Ovary (tissue), 10 donors: ENCODE measurements at regions of chr2 and their contacts with region 1.

Region 1: GRCh38 chr2:71306762-71307161 is 24.8 kb upstream of the ZNF638 start:
- DNase-seq: no peak
- H3K4me3 ChIP-seq: no peak overlapping the region
- H3K27ac ChIP-seq: no peak overlapping the region
- H3K4me1 ChIP-seq: no peaks in the 10 kb centered on the region
- H3K27me3 ChIP-seq: no peaks in the 10 kb centered on the region
- CTCF ChIP-seq: no peak
- EP300 ChIP-seq: no peak
- POLR2A ChIP-seq: no peak

Region 2: DNA sequence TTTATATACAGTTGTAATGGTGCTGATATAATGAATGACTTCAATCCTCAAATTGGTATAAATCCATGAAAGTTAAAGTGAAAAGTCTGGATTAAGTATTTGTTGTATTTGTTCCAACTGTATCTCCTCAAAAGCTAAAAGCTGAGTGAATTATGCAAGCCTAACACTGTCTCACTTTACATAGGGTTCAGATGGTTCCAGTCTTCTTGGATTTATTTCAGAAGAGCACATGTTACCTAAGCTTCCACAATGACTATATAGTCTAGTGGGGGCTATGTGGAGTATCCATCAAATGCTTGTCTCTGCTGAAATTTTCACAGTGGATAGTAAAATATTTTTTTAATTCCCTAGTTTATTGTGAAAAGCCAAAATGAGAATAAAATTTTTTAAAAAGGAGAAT is 189.7 kb before region 1 on chr2:
- intact Hi-C with region 1: no loop called
- DNase-seq: no peak
- H3K4me3 ChIP-seq: no peak overlapping the region
- H3K27ac ChIP-seq: no peak overlapping the region
- H3K4me1 ChIP-seq: no peaks in the 10 kb centered on the region
- H3K27me3 ChIP-seq: no peaks in the 10 kb centered on the region
- CTCF ChIP-seq: no peak
- EP300 ChIP-seq: no peak
- POLR2A ChIP-seq: no peak

Region 3: GRCh38 chr2:71498261-71498701 is 191.5 kb after region 1 on chr2:
- intact Hi-C with region 1: loop called in 1 of 4 experiments (anchors 5 kb)
- DNase-seq: no peak
- H3K4me3 ChIP-seq: no peak overlapping the region
- H3K27ac ChIP-seq: no peak overlapping the region
- H3K4me1 ChIP-seq: peaks cover 1% of the 10 kb centered on the region
- H3K27me3 ChIP-seq: no peaks in the 10 kb centered on the region
- CTCF ChIP-seq: no peak
- EP300 ChIP-seq: no peak
- POLR2A ChIP-seq: no peak

Region 4: GRCh38 chr2:71505086-71505769 is 198.5 kb after region 1 on chr2:
- intact Hi-C with region 1: loop called in 2 of 4 experiments (anchors 5 kb)
- DNase-seq: peak in 2 of 5 donors; percentile 39 to 43
- H3K4me3 ChIP-seq: no peak overlapping the region
- H3K27ac ChIP-seq: no peak overlapping the region
- H3K4me1 ChIP-seq: no peaks in the 10 kb centered on the region
- H3K27me3 ChIP-seq: no peaks in the 10 kb centered on the region
- CTCF ChIP-seq: no peak
- EP300 ChIP-seq: no peak
- POLR2A ChIP-seq: no peak

Region 5: DNA sequence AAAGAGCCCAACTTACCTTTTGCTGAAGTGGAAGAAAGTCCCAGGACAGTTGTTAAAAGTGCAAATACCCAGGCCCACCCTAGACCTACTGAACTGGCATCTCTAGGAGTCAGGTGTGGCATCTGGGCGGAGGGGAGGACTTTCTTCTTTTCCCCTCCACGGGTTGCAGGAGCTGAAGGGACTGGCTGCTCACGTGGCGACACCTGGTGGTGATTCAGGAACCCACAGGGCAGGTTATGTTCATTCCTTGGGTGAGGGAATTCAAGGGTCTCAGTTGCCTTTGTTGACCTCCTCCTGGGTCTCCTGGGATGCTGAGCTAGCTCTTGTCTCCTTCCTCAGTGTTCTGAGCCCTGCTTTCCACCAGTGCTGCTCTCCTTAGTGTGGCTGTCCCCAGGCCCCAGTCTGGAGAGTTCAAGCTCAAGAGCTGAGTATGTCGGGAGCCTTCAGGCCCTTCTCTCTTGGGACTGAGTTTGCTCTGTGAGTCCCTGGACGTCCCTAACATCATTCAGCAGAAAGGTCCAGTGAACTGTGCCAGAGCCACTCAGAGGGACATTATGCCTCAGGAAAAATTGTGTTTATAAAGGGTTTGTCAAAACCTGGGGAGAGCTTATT is 203.5 kb after region 1 on chr2:
- intact Hi-C with region 1: loop called in 2 of 4 experiments (anchors 5 kb)
- DNase-seq: peak; percentile 44 to 72 (median 65)
- H3K4me3 ChIP-seq: no peak overlapping the region
- H3K27ac ChIP-seq: no peak overlapping the region
- H3K4me1 ChIP-seq: no peaks in the 10 kb centered on the region
- H3K27me3 ChIP-seq: no peaks in the 10 kb centered on the region
- CTCF ChIP-seq: peak; percentile 62 to 68 (median 67)
- EP300 ChIP-seq: no peak
- POLR2A ChIP-seq: no peak

Region 6: GRCh38 chr2:72722492-72723070 is 1415.8 kb after region 1 on chr2:
- intact Hi-C with region 1: no loop called
- DNase-seq: no peak
- H3K4me3 ChIP-seq: no peak overlapping the region
- H3K27ac ChIP-seq: peak overlapping the region in 1 of 2 donors; percentile 54
- H3K4me1 ChIP-seq: peaks cover 11% of the 10 kb centered on the region
- H3K27me3 ChIP-seq: no peaks in the 10 kb centered on the region
- CTCF ChIP-seq: no peak
- EP300 ChIP-seq: no peak
- POLR2A ChIP-seq: no peak